ENCODE measurements at regions of chr3 and their contacts with region 1.

Region 1: GRCh38 chr3:154323891-154324738 is at the start of gene DHX36:
- DNase-seq: peak; percentile 90
- H3K4me3 ChIP-seq: peak within 1 kb of the TSS; percentile 80 to 86 (median 83)
- H3K27ac ChIP-seq: peak within 1 kb of the TSS; percentile 87
- H3K4me1 ChIP-seq: peaks cover 14% of the 10 kb centered on the region
- H3K27me3 ChIP-seq: peaks cover 0 to 2% of the 10 kb centered on the region in 2 experiments
- CTCF ChIP-seq: no peak
- POLR2A ChIP-seq: peak; percentile 90
- total RNA-seq, gene DHX36: 52.7 TPM in 2 replicates

Region 2: DNA sequence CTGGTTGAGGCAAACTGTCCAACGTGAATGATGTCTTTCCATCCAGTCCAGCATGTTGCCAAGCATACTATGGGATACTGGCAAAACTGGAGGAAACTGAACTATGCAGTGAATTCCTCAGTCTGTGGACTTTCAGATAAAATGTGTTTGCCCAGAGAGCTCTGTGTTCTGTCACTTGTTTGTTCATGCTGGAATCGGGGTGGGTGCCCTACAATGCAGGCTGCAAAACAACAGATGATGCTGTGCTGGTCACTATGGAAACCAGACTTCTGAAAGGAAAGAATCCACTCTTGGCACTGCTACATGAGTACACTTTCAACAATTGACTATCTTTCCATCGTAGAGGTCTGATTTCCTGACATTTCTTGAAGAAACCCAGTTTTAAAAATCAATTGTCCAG is 475.4 kb before region 1 on chr3:
- CTCF ChIA-PET with region 1: no interaction called
- POLR2A ChIA-PET with region 1: no interaction called
- dilution Hi-C with region 1: no loop called
- intact Hi-C with region 1: no loop called
- DNase-seq: no peak
- H3K4me3 ChIP-seq: no peak overlapping the region
- H3K27ac ChIP-seq: no peak overlapping the region
- H3K4me1 ChIP-seq: no peaks in the 10 kb centered on the region
- H3K27me3 ChIP-seq: no peaks in the 10 kb centered on the region
- CTCF ChIP-seq: no peak
- POLR2A ChIP-seq: no peak

Region 3: GRCh38 chr3:154120961-154121700 is 203.0 kb before region 1 on chr3 and contains the start of gene ARHGEF26:
- CTCF ChIA-PET with region 1: no interaction called
- POLR2A ChIA-PET with region 1: no interaction called
- dilution Hi-C with region 1: no loop called
- intact Hi-C with region 1: loop called (anchors 10 kb)
- DNase-seq: peak; percentile 84
- H3K4me3 ChIP-seq: peak within 1 kb of the TSS; percentile 35 to 68 (median 54)
- H3K27ac ChIP-seq: no peak within 1 kb of the TSS
- H3K4me1 ChIP-seq: peaks cover 3% of the 10 kb centered on the region
- H3K27me3 ChIP-seq: no peaks in the 10 kb centered on the region
- CTCF ChIP-seq: no peak
- POLR2A ChIP-seq: no peak
- total RNA-seq, gene ARHGEF26: 2.2 and 2.9 TPM in 2 replicates

Region 4: GRCh38 chr3:155070932-155071387 is 746.8 kb after region 1 on chr3:
- CTCF ChIA-PET with region 1: no interaction called
- POLR2A ChIA-PET with region 1: no interaction called
- dilution Hi-C with region 1: no loop called
- intact Hi-C with region 1: loop called (anchors 5 kb)
- DNase-seq: peak; percentile 95
- H3K4me3 ChIP-seq: no peak overlapping the region
- H3K27ac ChIP-seq: peak overlapping the region; percentile 93
- H3K4me1 ChIP-seq: peaks cover 27% of the 10 kb centered on the region
- H3K27me3 ChIP-seq: no peaks in the 10 kb centered on the region
- CTCF ChIP-seq: no peak
- POLR2A ChIP-seq: peak; percentile 28

Measured in endothelial cell of umbilical vein (primary cell).